ENCODE measurements at regions of chr2 and their contacts with region 1.

Region 1: DNA sequence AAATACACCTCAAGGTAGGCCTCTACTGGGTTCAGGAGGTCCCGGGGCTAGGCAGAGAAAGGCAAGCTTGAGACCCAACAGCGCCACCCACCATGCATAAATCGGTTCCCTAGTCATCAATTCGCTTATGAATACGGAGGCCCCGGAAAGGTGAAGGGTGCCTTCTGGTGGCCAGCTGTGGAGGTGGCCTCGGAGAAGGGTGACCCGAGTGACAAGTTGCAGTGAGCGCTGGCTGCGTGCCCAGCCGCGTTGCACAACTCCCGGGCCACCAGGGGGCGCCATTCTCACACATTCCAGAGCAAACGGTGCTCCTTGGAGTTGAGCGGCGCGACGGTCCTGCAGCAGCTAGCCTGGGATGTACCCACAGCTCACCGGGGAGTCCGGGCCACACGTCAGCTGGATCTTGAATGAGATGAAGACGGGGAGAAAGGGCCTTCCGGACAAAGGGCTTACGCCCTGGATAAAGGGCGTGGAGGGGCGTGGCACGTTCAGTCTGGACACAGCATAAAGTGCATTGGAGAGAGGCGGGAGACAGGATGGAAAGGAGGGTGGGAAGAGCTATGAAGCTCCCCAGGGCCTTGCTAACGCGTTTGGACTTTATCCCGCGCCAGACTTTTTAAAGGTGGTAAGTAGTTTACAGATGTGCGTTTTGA is 20.4 kb downstream of the TMSB10 start:
- DNase-seq: peak; percentile 100
- ATAC-seq: peak; percentile 83
- H3K4me3 Mint-ChIP-seq: peak overlapping the region; percentile 87
- H3K27ac Mint-ChIP-seq: peak overlapping the region; percentile 92
- H3K4me1 Mint-ChIP-seq: peaks cover 35% of the 10 kb centered on the region
- H3K27me3 Mint-ChIP-seq: no peaks in the 10 kb centered on the region

Region 2: GRCh38 chr2:84495539-84496146 is 430.2 kb before region 1 on chr2:
- CTCF ChIA-PET with region 1: interaction called, 14 read pairs
- POLR2A ChIA-PET with region 1: no interaction called
- intact Hi-C with region 1: loop called (anchors 1 kb)
- DNase-seq: peak; percentile 29
- ATAC-seq: peak; percentile 88
- H3K4me3 Mint-ChIP-seq: no peak overlapping the region
- H3K27ac Mint-ChIP-seq: no peak overlapping the region
- H3K4me1 Mint-ChIP-seq: peaks cover 20% of the 10 kb centered on the region
- H3K27me3 Mint-ChIP-seq: no peaks in the 10 kb centered on the region

Region 3: GRCh38 chr2:84817239-84817655 is 108.6 kb before region 1 on chr2:
- CTCF ChIA-PET with region 1: interaction called, 5 read pairs
- POLR2A ChIA-PET with region 1: no interaction called
- intact Hi-C with region 1: loop called in 1 of 2 experiments (anchors 1 kb)
- DNase-seq: peak; percentile 36
- ATAC-seq: peak; percentile 85
- H3K4me3 Mint-ChIP-seq: peak overlapping the region; percentile 20
- H3K27ac Mint-ChIP-seq: no peak overlapping the region
- H3K4me1 Mint-ChIP-seq: peaks cover 52% of the 10 kb centered on the region
- H3K27me3 Mint-ChIP-seq: no peaks in the 10 kb centered on the region

Region 4: GRCh38 chr2:84894758-84895520 is 30.9 kb before region 1 on chr2:
- CTCF ChIA-PET with region 1: interaction called, 42 read pairs
- POLR2A ChIA-PET with region 1: no interaction called
- intact Hi-C with region 1: no loop called
- DNase-seq: peak; percentile 39
- ATAC-seq: peak; percentile 35
- H3K4me3 Mint-ChIP-seq: peak overlapping the region; percentile 13
- H3K27ac Mint-ChIP-seq: peak overlapping the region; percentile 68
- H3K4me1 Mint-ChIP-seq: peaks cover 63% of the 10 kb centered on the region
- H3K27me3 Mint-ChIP-seq: no peaks in the 10 kb centered on the region

Region 5: DNA sequence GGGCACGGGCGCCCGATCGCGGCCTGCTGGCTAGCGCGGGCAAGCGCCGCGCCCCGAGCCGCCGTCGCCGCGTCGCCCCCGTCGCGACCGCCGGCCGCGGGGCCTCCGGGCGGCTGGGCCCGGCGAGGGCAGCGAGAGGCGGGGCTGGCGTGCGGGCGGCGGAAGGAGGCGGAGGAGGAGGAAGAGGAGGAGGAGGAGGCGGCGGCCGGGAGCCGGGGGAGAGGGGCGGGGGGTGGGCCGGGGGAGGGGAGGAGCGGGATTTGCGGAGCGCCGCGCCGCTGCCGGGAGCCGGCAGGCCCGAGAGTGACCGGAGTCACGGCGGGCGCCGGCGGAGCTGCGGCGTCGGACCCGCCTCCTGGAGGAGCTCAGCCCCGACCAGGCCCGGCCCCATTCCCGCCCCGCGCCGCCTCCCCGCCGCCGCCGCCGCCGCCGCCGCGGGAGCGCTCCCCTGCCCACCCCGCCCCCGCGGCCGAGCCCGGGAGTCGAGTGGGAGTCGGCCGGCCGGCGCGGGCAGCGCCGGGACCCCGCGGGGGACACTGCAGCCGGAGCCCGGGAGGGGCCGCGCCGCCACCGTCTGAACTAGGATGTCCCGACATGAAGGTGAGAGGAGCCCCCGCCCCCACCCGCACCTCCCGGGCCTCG is 45.1 kb after region 1 on chr2 and contains the start of gene KCMF1:
- CTCF ChIA-PET with region 1: interaction called, 44 read pairs
- POLR2A ChIA-PET with region 1: interaction called, 3 read pairs
- intact Hi-C with region 1: loop called in 1 of 2 experiments (anchors 1 kb)
- DNase-seq: peak; percentile 83
- ATAC-seq: peak; percentile 69
- H3K4me3 Mint-ChIP-seq: peak within 1 kb of the TSS; percentile 98
- H3K27ac Mint-ChIP-seq: peak within 1 kb of the TSS; percentile 100
- H3K4me1 Mint-ChIP-seq: peaks cover 38% of the 10 kb centered on the region
- H3K27me3 Mint-ChIP-seq: no peaks in the 10 kb centered on the region
- total RNA-seq, gene KCMF1: 78.1 to 98.5 TPM

Region 6: DNA sequence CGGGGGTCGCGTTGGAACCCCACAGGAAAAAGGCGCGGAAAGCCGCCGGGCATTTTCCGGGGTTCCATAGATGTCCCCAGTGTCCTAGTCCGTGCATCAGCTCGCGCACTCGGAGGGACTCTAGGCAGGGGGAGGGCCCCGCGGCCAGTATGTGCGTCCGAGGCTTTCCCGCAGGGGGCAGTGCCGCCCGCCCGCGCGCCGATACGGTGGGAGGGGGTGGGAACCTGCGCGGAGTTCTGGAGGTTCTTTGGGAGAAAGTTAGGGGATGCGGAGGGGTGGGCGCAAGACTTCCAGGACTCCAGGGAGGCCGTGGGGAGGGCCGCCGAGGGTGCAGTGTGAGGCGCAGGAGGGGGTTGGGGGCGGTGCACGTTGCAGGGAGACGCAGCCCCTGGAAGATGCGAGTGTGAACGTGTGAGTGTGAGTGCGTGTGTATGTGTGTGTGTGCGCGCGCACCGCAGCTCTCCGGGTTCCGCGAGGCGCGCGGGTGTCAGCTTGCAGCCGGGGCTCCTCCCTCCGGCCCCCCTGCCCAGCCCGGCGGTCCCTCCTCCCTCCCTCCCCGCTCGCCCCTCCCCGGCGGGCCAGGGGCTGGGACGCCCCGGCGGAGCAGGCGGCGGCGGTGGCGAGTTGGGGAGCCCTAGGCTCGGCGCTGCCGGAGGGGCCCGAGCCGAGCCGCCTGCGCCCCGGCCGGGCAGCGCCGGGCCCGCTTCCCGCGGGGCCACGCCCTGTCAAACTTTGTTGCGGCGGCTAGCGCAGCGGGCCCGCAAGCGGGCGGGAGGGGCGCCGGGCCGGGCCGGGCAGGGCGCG is 207.2 kb after region 1 on chr2 and contains the start of gene TCF7L1:
- CTCF ChIA-PET with region 1: no interaction called
- POLR2A ChIA-PET with region 1: no interaction called
- intact Hi-C with region 1: loop called in 1 of 2 experiments (anchors 5 kb)
- DNase-seq: peak; percentile 67
- ATAC-seq: peak; percentile 77
- H3K4me3 Mint-ChIP-seq: peak within 1 kb of the TSS; percentile 53
- H3K27ac Mint-ChIP-seq: no peak within 1 kb of the TSS
- H3K4me1 Mint-ChIP-seq: peaks cover 9% of the 10 kb centered on the region
- H3K27me3 Mint-ChIP-seq: peaks cover 49% of the 10 kb centered on the region
- total RNA-seq, gene TCF7L1: 0.07 TPM in 1 of 2 experiments, not detected in the other

Region 7: DNA sequence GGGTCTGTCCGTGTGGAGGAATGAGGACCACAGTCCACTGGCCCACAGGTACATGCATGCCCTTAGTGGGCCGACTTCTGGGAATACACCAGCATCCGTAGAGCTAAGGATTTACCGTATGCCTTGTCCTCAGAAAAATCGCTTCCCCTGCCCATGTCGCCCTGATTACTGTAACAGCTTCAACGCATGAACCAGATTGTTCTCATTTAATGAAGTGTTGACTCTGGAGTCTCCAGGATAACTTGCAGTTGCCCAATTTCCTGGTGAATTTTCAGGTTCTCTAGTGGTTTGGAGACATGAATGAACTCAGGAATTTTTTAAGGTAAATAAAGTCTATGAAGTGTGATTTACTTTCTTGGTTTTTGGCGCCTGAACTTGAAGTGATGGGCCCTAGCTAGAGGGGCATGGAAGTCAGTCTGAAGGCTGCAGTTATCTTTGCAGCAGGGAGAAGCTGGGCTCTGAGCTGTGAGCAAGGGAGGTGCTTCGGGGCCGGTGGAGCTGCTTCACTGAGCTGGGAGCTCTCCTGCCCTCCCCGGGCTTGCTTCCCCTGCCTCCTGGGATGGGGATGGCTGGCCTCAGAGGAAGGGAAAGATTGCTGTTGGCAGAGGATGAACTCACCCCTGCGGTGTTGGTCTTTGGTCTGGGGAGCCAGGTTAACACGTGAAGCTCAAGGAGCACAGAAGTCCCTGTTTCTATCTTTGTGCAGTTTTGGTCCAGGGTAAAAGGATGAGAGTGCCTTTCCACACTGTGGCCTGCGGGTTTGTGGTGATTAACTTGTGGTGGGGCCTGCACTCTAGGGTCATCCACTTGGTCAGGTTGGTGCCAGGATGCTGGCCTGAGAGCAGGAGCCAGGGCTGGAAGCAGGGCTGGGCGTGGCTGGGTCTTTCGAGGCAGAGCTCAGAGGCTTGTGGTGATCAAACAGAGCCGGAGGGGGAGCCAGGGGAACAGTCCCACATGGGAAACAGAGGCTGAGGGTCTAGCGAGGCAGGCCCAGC is 235.4 kb after region 1 on chr2:
- CTCF ChIA-PET with region 1: no interaction called
- POLR2A ChIA-PET with region 1: no interaction called
- intact Hi-C with region 1: no loop called
- DNase-seq: no peak
- ATAC-seq: no peak
- H3K4me3 Mint-ChIP-seq: no peak overlapping the region
- H3K27ac Mint-ChIP-seq: no peak overlapping the region
- H3K4me1 Mint-ChIP-seq: no peaks in the 10 kb centered on the region
- H3K27me3 Mint-ChIP-seq: peaks cover 2% of the 10 kb centered on the region